GM23248 (cell line): ENCODE measurements at regions of chr10 and their contacts with region 1.

Region 1: GRCh38 chr10:15585303-15585715 is 134.4 kb downstream of the ITGA8 start:
- DNase-seq: peak; percentile 74
- H3K4me3 ChIP-seq: no peak overlapping the region
- H3K27ac ChIP-seq: no peak overlapping the region
- H3K4me1 ChIP-seq: peaks cover 11% of the 10 kb centered on the region; the same call in 1 of the 2 replicates
- H3K27me3 ChIP-seq: no peaks in the 10 kb centered on the region

Region 2: DNA sequence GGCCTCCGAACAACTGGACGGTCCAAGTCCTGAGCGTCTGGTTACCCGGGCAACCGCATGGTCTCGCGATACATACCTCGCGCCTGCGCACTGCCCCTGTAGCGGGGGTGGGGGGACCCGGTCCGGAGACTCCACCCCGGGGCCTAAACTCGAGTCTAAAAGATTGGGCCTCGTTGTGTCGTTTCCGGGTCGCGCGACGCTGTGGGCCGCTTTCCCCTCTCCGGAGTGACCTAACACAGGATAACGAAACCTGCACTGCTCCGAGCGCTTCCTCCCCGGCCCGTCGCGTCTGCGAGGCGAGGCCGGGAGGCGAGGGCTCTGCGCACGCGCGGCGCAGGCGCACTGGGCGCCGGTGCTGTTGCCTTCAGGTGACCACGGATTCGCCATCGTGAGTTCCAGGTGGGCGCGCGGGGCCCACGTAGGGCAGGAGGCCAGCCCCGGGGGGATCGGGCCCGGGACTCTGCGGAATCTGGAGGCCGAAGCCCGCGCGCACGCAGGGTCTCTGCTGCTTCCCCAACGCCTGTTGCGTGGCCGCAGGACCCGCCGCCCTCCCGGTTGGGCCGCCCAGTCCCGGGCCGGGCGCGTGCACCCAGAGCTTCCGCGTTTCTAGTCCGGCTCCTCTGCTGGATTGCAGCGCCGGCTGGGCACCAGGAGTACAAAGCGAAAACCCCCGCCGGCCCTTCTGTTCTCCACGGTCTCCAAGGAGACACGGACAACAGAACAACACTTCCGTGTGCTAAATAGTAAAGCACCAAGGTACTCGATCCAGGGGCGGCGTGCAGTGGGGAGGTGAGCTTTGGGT is 488.1 kb before region 1 on chr10 and contains the start of gene RPP38:
- in situ Hi-C with region 1: no loop called
- DNase-seq: peak; percentile 98
- H3K4me3 ChIP-seq: peak within 1 kb of the TSS; percentile 87
- H3K27ac ChIP-seq: peak within 1 kb of the TSS; percentile 94
- H3K4me1 ChIP-seq: peaks cover 13% of the 10 kb centered on the region
- H3K27me3 ChIP-seq: no peaks in the 10 kb centered on the region
- total RNA-seq, gene RPP38: 8.0 and 8.9 TPM in 2 replicates

Region 3: DNA sequence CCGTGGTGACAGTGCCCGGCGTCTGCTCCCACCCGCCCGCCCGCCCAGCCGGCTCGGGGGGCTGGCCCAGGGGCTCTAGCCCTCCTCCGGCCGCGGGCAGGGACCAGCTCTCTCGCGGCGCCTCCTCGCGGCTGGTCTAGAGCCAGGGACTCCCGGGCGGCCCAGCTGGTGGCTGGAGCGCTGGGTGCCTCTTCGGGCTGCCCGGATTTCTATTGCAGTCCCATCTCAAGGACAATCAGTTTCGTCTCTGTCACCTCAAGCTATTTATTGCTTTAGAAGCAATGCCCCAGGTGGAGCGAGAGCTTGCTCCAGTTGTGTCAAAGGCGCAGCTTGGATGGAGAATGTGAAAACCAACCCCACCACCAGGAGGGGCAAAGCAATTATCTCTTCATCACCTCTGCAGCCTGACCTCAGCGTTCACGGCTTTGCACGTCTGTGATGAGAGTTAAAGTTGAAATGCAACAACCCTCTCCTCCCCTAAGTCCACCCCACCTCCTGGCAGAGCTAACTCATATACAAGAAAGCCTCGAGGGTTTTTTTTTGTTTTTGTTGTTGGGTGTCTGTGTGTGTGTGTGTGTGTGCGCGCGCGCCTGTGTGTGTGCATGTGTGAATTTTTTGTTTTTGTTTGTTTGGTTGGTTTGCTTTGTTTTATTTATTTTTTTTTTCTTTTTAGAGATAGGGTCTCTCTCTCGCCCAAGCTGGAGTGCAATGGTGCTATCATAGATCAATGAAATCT is 134.8 kb after region 1 on chr10 and contains the start of gene ITGA8:
- in situ Hi-C with region 1: loop called (anchors 10 kb)
- DNase-seq: peak; percentile 50
- H3K4me3 ChIP-seq: peak within 1 kb of the TSS; percentile 60
- H3K27ac ChIP-seq: no peak within 1 kb of the TSS
- H3K4me1 ChIP-seq: no peaks in the 10 kb centered on the region
- H3K27me3 ChIP-seq: peaks cover 35% of the 10 kb centered on the region
- total RNA-seq, gene ITGA8: 0.32 TPM in 1 of 2 replicates, not detected in the other